ENCODE measurements at regions of chr11 and their contacts with region 1.

Region 1: DNA sequence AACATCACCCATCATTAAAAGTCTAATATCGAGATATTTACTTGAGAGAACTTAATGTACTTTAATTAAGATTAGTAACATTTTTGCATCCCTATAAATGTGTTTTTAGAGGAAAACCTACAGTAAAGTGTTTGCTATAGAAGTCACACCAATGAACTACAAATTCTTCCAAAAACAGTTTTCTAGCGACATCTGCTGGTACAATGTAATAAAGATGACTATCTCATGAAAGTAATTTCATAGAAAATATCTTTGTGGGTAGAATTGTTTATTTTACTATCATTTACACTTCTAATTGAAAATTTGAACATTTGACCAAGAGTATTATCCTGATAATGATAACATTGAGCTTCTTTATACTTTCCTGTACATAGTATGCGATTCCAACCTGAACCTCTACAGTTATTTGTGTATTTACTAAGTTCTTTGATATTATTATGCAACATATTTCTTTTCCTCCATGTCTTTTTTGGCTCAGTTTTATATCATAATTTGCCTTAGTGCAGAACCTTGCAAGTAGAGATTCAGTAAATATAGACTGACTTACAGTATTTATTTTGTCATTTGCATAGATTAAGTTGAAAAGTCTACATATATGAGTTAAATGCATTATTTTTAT is 252.7 kb downstream of the TMEM135 start:
- DNase-seq: peak in 1 of 42 donors; percentile 21

Region 2: DNA sequence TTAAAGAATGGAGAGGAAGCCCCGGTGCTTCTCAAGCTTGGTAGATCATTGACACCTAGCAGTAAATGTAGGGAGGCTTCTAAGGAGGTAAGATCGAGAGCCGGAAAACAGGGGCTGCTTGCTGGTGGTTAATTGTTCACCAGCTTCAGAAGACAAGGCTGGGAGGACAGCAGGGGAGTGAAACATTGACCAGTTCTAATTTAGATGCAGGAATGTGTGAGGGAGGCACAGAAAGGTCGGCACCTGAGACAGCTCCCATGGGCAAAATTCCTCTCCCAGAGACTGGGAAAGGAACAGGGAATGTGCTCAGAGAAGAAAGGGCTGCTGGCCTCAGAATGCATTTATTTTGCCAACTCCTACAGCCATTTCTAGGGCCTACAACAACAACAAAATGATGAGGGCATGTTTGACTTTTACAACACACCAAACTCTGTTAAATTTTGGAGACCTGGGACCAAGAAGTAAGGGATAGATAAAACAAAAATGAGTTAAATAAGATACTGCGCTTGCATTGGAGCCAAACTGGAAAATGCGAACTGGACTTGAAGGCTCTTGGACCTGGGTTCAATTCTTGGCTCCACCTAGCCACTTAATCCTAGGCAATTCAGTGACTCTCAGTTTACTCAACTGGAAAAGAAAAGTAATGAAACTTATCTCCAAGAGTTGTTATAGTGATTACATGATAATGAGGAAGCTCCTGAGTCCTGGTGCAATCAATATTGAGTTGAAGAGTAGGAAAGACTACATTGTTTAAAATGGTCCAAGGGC is 366.2 kb before region 1 on chr11:
- intact Hi-C with region 1: no loop called
- DNase-seq: no peak

Region 3: DNA sequence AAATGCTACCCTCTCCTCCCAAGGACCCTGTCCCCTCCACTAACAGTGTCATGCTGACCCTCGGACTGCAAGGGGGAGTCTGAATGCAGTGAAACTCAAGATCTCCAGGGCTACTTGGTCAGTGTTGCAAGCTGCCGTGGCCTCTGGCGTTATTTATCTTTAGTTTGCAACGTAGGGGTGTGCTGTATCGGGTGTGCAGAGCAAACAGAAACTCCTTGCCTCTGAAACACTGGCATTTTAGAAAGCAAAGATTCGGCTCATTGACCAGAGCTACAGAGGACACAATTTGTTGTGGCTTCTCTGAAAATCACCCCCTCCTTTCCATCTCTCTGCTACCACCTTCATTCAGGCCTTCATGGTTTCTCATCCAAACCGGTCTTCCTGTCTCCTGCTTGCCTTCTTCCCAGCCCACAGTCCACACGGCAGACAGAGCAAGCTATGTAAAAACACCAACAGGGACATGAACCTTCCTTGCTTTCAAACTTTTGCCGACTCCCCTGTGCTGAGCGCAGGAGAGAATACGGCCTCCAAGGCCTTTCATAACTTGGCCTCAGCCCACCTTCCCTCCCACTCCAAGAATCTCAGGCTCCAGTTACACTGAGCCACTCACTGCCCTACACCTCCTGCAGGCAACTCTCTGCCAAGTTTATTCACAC is 350.2 kb before region 1 on chr11:
- intact Hi-C with region 1: loop called (anchors 5 kb)
- DNase-seq: no peak